ENCODE measurements at regions of chr17 and their contacts with region 1.

Region 1: GRCh38 chr17:77054936-77055335 is 85.8 kb upstream of the SEC14L1 start:
- DNase-seq: no peak
- H3K4me3 ChIP-seq: no peak overlapping the region
- CTCF ChIP-seq: no peak

Region 2: DNA sequence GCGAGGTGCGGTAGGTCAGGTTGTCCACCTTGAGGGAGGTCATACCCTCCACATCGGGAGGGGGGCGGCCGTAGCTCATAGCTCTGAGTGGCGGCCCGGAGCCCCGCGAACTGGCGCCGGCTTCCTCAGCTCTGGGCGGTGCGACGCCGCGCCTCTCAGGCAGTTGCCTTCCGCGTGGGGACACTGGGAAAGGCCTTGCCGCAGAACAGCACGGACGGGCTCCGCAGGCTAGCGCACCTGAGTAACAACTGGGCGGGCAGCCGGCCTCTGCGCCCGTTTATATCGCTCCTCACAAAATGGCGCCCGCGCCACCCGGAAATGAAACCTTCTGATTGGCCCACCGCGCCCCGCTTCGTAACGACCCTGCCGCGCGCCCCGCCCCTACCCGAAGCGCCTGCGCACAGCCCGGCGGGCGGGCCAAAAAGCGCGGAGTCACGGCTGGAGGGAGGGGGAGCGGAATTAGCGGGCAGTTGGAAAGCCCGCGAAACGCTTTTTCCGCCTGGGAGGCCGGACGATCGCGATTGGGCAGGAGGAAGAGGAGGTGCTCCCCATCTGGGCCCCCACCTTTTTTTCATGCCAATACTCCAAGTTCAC is 317.8 kb before region 1 on chr17 and contains the start of gene SRSF2:
- CTCF ChIA-PET with region 1: interaction called, 12 read pairs
- POLR2A ChIA-PET with region 1: no interaction called
- DNase-seq: peak; percentile 84
- H3K4me3 ChIP-seq: peak within 1 kb of the TSS; percentile 97
- CTCF ChIP-seq: no peak

Region 3: GRCh38 chr17:76845541-76846017 is 209.4 kb before region 1 on chr17:
- CTCF ChIA-PET with region 1: interaction called, 12 read pairs
- POLR2A ChIA-PET with region 1: no interaction called
- DNase-seq: no peak
- H3K4me3 ChIP-seq: no peak overlapping the region
- CTCF ChIP-seq: no peak

Region 4: DNA sequence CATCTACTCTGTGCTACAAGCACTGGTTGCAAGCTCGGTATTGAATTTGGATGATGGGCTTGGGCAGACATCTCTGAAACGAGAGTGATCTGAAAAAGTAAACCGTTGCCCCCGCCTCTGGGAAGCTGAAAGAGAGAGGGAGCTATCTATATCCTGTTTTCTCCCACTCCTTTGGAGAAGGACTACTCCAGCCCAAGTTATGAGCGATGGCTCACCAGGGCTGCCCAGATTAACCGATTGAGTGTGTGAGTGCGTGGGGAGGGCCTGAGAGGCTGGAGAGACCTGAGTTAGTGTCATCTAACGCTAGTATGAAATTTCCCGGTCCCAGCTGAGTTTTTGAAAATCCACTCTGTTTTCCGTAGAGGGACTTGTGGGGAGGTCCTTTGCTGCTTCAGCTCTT is 175.2 kb before region 1 on chr17:
- CTCF ChIA-PET with region 1: interaction called, 13 read pairs
- POLR2A ChIA-PET with region 1: no interaction called
- DNase-seq: no peak
- H3K4me3 ChIP-seq: no peak overlapping the region
- CTCF ChIP-seq: no peak

Region 5: DNA sequence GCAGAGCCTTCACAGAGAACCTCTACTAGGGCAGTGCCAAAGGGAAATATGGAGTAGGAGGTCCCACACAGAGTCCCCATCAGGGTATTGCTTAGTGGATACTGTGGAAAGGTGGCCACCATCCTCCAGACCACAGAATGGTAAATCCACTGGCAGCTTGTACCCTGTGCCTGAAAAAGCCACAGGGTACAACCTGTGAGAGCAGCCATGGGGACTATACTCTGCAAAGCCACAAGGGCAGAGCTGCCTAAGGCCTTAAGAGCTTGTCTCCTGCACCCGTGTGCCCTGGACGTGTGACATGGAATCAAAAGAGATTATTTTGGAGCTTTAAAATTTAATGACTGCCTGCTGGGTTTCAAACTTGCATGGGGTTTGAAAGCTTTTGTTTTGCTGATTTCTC is 32.2 kb before region 1 on chr17:
- CTCF ChIA-PET with region 1: interaction called, 14 read pairs
- POLR2A ChIA-PET with region 1: no interaction called
- DNase-seq: no peak
- H3K4me3 ChIP-seq: no peak overlapping the region
- CTCF ChIP-seq: no peak

Region 6: GRCh38 chr17:77042476-77043231 is 12.3 kb before region 1 on chr17:
- CTCF ChIA-PET with region 1: interaction called, 34 read pairs
- POLR2A ChIA-PET with region 1: no interaction called
- DNase-seq: no peak
- H3K4me3 ChIP-seq: no peak overlapping the region
- CTCF ChIP-seq: no peak

Region 7: GRCh38 chr17:77076124-77076872 is 21.4 kb after region 1 on chr17:
- CTCF ChIA-PET with region 1: interaction called, 115 read pairs
- POLR2A ChIA-PET with region 1: no interaction called
- DNase-seq: no peak
- H3K4me3 ChIP-seq: no peak overlapping the region
- CTCF ChIP-seq: no peak